K562 (cell line): ENCODE measurements at regions of chr13 and their contacts with region 1.

Region 1: DNA sequence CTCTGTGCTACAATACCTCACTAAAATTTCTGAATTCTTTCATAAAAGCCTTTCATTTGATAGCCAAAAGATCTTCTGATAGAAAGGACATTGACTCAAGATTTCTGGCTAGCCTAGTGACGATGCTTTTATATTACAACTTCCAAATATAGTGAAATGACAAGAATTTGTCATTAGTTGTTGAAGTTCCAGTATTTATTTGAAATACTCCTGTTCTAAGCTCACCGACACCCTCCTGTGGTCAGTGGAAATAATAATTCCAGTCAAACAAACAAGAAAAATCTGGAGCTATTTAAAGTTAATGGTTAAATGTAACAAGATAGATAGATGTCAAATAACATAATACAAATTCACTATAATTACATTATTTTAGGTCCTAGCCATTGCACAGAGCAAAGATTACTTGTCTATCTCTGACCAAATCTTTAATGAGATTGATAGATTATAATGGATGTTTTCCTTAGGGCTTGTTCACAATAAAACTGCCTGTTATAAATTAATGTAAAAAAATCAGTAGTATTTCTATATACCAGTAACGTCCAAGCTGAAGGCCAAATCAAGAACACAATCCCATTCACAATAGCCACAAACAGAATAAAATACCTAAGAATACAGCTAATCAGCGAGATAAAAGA is 195.5 kb downstream of the RGCC start:
- DNase-seq: peak; percentile 11 to 21 (median 18)
- ATAC-seq: no peak
- H3K4me3 ChIP-seq: no peak overlapping the region
- H3K27ac ChIP-seq: no peak overlapping the region
- H3K4me1 ChIP-seq: no peaks in the 10 kb centered on the region
- H3K27me3 ChIP-seq: no peaks in the 10 kb centered on the region
- CTCF ChIP-seq: peak; percentile 14 to 69 (median 21); a peak in 3 of 6 replicates
- EP300 ChIP-seq: no peak
- POLR2A ChIP-seq: no peak
- RAD21 ChIP-seq: peak; percentile 74 to 78

Region 2: GRCh38 chr13:41411522-41411921 is 241.3 kb before region 1 on chr13:
- CTCF ChIA-PET with region 1: no interaction called
- POLR2A ChIA-PET with region 1: no interaction called
- in situ Hi-C with region 1: no loop called
- intact Hi-C with region 1: loop called (anchors 2 kb)
- DNase-seq: peak in 2 of 4 experiments; percentile 20 to 37
- ATAC-seq: peak; percentile 85
- H3K4me3 ChIP-seq: no peak overlapping the region
- H3K27ac ChIP-seq: no peak overlapping the region
- H3K4me1 ChIP-seq: no peaks in the 10 kb centered on the region; a peak in 1 of 5 replicates
- H3K27me3 ChIP-seq: no peaks in the 10 kb centered on the region
- CTCF ChIP-seq: peak; percentile 31 to 54 (median 47); a peak in 4 of 6 replicates
- EP300 ChIP-seq: no peak
- POLR2A ChIP-seq: no peak
- RAD21 ChIP-seq: peak; percentile 53 to 77

Region 3: DNA sequence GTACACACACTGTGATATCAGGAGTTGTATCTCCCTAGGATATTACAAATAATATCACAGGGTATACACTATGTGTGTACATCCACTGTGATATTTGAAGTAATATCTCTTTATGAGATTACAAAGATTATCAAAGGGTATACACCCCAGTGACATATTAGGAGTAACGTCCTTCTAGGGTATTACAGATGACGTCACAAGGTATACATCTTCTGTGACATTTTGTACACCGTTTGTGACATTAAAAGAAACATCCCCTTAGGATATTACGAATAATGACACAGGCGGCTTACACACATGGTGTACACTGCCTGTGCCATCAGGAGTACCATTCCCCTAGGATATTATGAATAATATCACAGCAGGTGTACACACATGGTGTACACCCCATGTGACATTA is 208.9 kb before region 1 on chr13:
- CTCF ChIA-PET with region 1: no interaction called
- POLR2A ChIA-PET with region 1: no interaction called
- in situ Hi-C with region 1: no loop called
- intact Hi-C with region 1: no loop called
- DNase-seq: no peak
- ATAC-seq: no peak
- H3K4me3 ChIP-seq: no peak overlapping the region
- H3K27ac ChIP-seq: no peak overlapping the region
- H3K4me1 ChIP-seq: no peaks in the 10 kb centered on the region
- H3K27me3 ChIP-seq: no peaks in the 10 kb centered on the region; a peak in 1 of 5 replicates
- CTCF ChIP-seq: no peak
- EP300 ChIP-seq: no peak
- POLR2A ChIP-seq: no peak
- RAD21 ChIP-seq: no peak